Thyroid gland (tissue), 4 donors: ENCODE measurements at regions of chr6 and their contacts with region 1.

Region 1: DNA sequence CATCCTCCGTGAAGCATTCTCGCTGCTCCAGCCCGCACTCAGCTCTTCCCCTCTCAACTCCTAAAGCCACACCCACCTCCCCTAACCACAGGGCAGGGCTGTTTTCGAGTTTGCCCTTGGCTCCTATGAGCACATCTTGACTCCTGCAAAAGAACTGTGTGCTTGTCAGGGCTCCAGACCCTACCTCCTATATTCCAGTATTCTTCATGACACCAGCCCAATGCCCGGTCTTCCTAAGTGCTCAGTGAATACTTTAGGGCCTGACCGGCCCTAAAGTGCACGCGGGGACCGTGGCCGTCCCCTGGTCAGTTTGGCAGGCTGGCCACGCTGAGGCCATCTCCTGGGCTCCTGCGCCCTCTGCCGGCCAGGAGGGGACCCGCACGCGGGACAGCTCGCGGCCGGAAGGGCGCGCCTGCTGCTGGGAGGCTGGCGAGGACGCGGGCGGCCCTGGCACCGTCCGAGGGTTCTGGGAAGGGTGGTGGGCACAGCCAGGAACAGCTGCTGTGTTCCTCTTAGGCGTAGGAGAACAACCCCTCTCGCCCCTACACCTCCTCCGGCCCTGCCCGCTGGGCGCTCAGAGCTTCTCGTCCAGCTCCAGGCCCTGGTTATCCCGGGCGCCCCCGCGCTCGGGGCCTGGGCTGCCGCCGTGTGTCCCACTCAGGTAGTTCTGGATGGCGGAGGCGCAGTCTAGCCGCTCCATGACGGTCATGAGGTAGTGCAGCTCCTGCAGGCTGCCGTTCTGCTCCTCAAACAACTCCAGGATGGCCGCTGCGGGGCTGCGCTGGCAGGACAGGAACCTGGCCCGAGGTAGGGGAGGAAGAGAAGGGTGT is 11.0 kb downstream of the UNC5CL start:
- DNase-seq: peak; percentile 87 to 89
- H3K4me3 ChIP-seq: peak overlapping the region; percentile 8 to 29 (median 14)
- H3K27ac ChIP-seq: peak overlapping the region in 1 of 3 donors; percentile 54
- H3K4me1 ChIP-seq: peaks cover 5 to 15% of the 10 kb centered on the region in 2 donors
- H3K27me3 ChIP-seq: no peaks in the 10 kb centered on the region
- CTCF ChIP-seq: peak; percentile 92 to 99 (median 98)
- POLR2A ChIP-seq: peak in 1 of 2 donors; percentile 23

Region 2: GRCh38 chr6:40894962-40895799 is 132.8 kb before region 1 on chr6:
- intact Hi-C with region 1: loop called (anchors 2 kb)
- DNase-seq: peak; percentile 75 to 76
- H3K4me3 ChIP-seq: no peak overlapping the region
- H3K27ac ChIP-seq: no peak overlapping the region
- H3K4me1 ChIP-seq: no peaks in the 10 kb centered on the region
- H3K27me3 ChIP-seq: no peaks in the 10 kb centered on the region
- CTCF ChIP-seq: peak; percentile 35 to 91 (median 75)
- POLR2A ChIP-seq: no peak

Region 3: GRCh38 chr6:41135062-41135832 is 107.2 kb after region 1 on chr6:
- intact Hi-C with region 1: no loop called
- DNase-seq: no peak
- H3K4me3 ChIP-seq: no peak overlapping the region
- H3K27ac ChIP-seq: no peak overlapping the region
- H3K4me1 ChIP-seq: no peaks in the 10 kb centered on the region
- H3K27me3 ChIP-seq: no peaks in the 10 kb centered on the region
- CTCF ChIP-seq: no peak
- POLR2A ChIP-seq: no peak